Esophagus squamous epithelium (tissue), 5 donors: ENCODE measurements at regions of chr20 and their contacts with region 1.

Region 1: DNA sequence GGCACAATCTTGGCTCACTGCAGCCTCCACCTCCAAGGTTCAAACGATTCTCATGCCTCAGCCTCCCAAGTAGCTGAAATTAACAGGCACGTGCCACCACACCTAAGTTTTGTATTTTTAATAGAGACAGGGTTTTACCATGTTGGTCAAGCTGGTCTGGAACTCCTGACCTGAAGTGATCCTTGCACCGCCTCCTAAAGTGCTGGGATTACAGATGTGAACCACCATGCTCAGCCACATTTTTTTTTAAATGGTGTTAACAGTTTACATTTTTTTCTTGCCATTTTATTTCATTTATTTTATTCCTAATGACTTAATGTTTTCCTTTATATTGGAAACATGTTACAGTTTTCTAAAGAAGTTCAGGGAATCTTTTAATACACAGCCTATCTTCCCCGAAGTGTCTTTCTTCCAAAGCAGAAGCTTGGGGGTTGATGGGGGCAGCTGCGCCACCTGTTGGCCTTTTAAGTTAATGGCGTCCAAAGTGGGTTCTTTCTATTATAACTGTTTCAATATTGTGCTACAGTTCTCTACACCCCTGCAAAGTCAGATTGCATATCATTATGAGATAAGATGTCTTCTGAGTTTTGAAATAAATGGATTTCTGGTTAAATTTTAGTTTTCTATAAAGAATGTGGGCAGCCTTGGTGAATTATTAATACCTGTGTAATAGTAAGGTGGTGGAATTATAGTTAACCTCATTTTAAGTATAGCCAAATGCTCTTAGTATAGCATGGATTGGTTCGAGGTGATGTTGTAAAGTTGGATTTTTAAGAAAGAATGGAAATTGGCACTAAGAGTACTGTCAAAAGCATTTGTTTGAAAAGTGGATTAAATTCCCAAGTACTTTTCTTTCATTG is 42.0 kb upstream of the PLCG1 start:
- DNase-seq: no peak
- H3K4me3 ChIP-seq: no peak overlapping the region
- H3K27ac ChIP-seq: no peak overlapping the region
- H3K4me1 ChIP-seq: peaks cover 0 to 9% (median 0%) of the 10 kb centered on the region in 3 donors
- H3K27me3 ChIP-seq: no peaks in the 10 kb centered on the region
- CTCF ChIP-seq: peak; percentile 76 to 87 (median 82)
- POLR2A ChIP-seq: no peak

Region 2: DNA sequence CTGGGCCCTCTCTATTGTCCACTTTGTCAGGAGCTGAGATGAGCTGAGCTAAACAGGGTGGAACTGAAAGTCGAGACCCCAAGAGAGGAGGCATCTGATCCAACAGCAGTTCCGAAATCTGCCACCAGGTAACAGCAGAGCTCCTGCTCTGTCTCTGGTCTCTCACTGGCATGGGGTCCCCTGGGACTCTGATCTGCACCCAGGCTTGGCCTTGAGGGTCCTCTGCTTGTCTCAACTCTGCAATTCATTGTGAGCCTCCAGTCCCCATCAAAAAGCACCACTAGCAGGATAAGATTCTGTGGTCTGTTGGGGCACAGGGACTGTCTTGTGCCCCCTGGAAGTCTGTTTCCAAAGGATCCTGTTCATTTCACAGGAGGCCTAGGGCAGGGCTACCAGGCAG is 129.2 kb before region 1 on chr20:
- intact Hi-C with region 1: loop called (anchors 5 kb)
- DNase-seq: no peak
- H3K4me3 ChIP-seq: no peak overlapping the region
- H3K27ac ChIP-seq: no peak overlapping the region
- H3K4me1 ChIP-seq: peaks cover 0 to 19% (median 0%) of the 10 kb centered on the region in 3 donors
- H3K27me3 ChIP-seq: peaks cover 0 to 3% (median 0%) of the 10 kb centered on the region in 4 donors
- CTCF ChIP-seq: peak in 1 of 6 experiments; percentile 19
- POLR2A ChIP-seq: no peak

Region 3: DNA sequence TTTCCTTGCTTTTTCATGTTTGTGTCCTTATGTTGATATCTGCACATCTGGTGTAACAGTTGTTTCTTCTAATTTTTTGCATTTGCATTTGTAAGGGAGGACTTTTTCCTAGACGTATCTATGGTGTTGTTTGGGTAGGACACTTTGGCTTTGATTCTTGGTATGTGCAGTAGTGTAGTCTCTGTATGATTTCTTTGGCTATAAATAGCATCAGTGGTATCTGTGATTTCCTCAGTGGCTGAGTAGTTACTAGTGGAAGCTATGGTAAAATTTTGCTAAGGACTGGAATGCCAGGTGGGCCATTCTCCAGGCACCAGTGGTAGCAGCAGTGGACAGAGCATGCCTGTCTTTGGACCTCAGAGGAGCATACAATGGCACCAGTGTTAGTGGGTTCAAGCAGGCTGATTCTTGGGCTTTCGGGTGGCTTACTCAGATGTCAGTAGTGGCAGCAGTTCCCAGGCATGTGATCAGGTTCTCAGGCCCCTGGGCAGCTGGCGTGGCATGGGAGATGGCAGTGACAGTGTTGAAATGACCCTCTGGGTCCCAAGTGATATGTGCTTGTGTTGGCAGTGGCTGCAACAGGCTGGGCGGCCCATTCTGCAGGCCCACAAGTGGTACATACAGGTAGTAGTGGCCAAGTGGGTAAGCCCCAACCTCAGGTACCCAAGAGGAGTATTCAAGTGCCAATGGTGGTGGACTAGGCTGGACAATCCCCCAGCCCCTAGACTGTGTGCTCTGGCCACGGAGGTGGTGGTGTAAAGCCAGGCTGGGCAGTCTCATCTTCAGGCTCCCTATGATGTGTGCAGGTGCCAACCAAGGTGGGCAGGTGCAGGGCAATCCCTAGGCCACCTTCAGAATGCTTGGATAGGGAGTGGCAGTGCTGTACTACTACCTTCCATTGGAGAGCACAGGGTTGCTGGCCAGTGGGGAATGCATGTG is 96.5 kb after region 1 on chr20:
- intact Hi-C with region 1: no loop called
- DNase-seq: no peak
- H3K4me3 ChIP-seq: no peak overlapping the region
- H3K27ac ChIP-seq: no peak overlapping the region
- H3K4me1 ChIP-seq: no peaks in the 10 kb centered on the region
- H3K27me3 ChIP-seq: no peaks in the 10 kb centered on the region
- CTCF ChIP-seq: no peak
- POLR2A ChIP-seq: no peak

Region 4: DNA sequence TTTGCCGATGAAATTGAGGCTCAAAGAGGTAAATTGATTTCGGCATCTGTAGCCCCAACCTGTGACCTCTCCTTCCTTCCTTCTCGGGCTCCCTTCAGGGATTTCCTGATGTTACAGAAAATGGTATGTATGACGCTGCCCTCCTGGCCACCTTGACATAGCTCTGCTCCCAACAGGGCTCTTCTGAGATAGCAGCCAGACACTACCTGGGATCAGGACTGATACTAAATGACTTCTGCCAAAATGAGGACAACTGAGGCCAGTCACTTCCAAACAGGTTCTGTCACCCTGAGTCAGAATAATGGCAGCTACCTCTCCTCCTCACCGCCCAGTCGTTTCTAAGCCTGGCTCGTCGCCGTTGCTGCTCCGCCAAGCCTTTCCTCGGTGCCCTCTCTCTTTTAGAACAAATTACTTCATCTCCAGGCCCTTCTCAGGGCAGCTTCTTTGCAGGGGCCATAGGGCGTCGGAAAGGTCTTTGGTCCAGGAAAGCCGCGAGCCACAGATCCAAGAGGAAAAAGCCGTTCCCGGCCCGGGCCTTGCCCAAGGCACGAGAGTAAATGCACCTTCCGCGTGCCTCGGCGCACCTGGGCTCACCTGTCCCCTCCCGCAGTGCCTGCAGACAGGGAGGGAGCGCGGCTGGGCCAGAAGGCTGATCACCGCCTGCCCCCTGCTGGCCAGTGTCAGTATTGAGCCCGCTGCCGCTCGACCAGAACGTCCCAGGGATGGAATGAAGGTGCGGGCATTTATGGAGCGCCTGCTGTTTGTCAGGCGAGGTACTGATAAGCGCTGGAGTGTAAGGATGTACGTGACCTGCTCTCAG is 244.4 kb after region 1 on chr20:
- intact Hi-C with region 1: no loop called
- DNase-seq: no peak
- H3K4me3 ChIP-seq: peak overlapping the region; percentile 47 to 70 (median 56)
- H3K27ac ChIP-seq: peak overlapping the region; percentile 92 to 94 (median 93)
- H3K4me1 ChIP-seq: peaks cover 16 to 70% (median 38%) of the 10 kb centered on the region in 3 donors
- H3K27me3 ChIP-seq: no peaks in the 10 kb centered on the region
- CTCF ChIP-seq: peak; percentile 82 to 100 (median 99)
- POLR2A ChIP-seq: no peak